Head of caudate nucleus (tissue), 42 donors: ENCODE measurements at regions of chr14 and their contacts with region 1.

Region 1: DNA sequence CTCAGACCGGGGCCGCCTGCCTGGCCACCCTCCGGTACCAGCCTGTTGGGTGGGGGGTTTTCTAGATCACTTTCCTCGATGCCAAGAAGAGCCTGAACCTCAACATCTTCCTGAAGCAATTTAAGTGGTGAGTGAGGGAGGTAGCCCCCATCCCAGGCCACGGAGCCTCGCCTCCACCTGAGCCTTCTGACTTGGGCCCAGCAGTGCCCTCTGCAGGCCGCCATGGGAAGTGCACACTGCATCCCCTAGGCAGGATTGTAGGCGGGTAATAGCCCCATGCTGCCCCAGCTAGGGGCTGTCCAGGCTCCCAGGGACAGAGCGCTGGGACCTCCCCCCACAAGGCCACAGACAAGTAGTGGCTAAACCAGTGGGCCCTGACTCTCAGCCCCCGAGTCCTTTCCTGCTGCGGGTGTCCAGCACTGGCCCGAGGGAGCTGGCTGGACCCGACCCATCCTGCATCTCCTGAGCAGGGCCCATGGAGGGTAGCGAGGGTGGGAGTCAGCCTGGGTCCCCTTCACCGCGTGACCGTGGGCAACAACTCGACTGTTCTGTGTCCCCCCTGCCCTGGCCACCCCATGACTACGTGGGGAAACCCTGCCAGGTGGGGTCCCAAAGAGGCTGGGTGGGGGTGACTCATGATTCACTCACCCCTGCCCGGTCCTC is 15.3 kb upstream of the ADSS1 start:
- DNase-seq: peak in 41 of 42 donors; percentile 57 to 91 (median 79)

Region 2: DNA sequence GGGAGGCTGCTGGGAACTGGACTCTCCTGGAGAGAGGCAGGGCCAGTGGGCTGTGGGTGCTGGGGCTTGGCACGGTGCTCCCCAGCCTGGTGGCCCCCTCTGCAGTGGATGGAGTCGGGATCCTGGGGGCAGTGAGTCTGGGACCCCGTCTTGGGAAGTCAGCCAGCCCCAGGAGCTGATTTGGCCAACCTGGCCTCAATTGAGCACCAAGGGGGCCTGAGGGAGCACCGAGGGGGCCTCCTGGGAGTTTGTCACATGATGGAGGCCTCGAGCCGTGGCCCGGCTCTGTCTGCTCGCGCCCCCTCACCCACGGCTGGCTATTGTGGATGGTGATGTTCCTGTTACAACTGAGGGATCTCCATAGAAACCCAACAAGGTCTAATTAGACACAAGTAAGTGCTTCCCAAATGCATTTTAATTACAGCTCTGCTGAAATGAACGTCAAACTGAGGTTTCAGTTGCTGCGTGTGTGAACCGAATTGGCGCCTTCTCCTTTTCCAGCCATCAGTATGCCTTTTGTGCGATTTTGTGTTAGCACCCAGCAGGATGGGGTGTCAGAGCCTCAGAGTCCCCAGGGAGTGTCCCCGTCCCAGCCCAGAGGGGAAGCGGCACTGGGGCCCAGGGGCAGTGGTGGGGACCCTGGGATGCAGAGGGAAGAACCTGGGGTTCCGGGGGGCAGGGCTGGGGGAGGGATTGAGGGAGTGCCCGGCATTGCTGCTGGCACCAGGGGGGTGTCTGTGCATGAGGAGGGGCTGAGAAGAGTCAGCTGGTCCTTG is 498.5 kb before region 1 on chr14:
- intact Hi-C with region 1: no loop called
- DNase-seq: no peak

Region 3: DNA sequence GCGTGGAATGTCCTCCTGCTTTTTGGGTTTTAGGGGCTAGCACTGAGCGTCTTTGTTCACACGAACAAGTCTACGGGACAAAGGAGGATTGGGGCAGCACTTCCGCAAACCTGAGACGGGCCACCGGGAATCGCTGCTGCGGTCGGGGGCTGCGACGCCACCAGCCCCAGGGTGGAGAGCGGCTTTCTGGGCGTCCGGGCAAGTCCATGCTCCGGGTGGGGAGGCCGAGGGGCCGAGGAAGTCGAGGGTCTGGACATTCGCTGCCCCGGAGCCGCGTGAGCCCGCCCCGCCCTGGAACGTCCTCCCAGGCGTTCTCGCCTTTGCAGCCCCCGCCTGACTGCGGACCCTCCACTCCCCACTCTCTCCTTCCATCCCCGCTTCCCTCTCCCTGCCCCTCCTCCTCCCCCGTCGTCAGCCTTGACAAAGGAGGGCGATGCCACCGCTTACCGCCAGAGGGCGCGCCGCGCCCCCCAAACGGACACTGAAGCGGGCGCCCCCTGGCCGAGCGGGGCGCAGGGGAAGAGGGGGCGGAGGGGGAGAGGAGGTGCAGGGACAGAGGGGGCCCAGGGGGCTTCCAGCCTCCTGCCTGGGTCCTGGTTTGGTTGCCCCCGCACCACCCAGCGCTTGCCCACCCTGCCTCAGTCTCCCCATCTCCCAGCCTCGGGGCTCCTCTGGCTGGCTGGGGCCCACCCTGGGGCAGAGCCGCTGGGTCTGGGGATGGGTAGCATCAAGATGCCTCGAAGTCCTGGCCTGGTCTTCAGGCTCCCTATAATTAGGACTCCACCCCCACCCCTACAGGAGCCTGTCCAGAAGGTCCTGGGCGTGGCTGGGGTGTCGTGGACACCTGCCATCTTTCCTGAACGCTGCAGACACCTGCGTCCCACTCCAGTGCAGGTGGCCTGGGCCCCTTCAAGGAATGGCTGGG is 58.4 kb before region 1 on chr14:
- intact Hi-C with region 1: loop called (anchors 2 kb)
- DNase-seq: peak; percentile 51 to 92 (median 82)

Region 4: GRCh38 chr14:104830781-104831180 is 122.0 kb after region 1 on chr14:
- intact Hi-C with region 1: no loop called
- DNase-seq: peak in 4 of 42 donors; percentile 0 to 30 (median 18)